ENCODE measurements at regions of chr1 and their contacts with region 1.

Region 1: GRCh38 chr1:159924981-159925712 is at the start of gene TAGLN2:
- DNase-seq: peak; percentile 82 to 94 (median 91)
- ATAC-seq: peak; percentile 55
- H3K4me3 ChIP-seq: peak within 1 kb of the TSS; percentile 83 to 96
- H3K4me3 Mint-ChIP-seq: peak within 1 kb of the TSS; percentile 95
- H3K27ac ChIP-seq: peak within 1 kb of the TSS; percentile 94 to 98
- H3K27ac Mint-ChIP-seq: peak within 1 kb of the TSS; percentile 98
- H3K4me1 ChIP-seq: peaks cover 40% of the 10 kb centered on the region
- H3K4me1 Mint-ChIP-seq: peaks cover 53% of the 10 kb centered on the region
- H3K27me3 ChIP-seq: no peaks in the 10 kb centered on the region
- H3K27me3 Mint-ChIP-seq: no peaks in the 10 kb centered on the region
- CTCF ChIP-seq: no peak
- total RNA-seq, gene TAGLN2: 235 to 238 TPM

Region 2: DNA sequence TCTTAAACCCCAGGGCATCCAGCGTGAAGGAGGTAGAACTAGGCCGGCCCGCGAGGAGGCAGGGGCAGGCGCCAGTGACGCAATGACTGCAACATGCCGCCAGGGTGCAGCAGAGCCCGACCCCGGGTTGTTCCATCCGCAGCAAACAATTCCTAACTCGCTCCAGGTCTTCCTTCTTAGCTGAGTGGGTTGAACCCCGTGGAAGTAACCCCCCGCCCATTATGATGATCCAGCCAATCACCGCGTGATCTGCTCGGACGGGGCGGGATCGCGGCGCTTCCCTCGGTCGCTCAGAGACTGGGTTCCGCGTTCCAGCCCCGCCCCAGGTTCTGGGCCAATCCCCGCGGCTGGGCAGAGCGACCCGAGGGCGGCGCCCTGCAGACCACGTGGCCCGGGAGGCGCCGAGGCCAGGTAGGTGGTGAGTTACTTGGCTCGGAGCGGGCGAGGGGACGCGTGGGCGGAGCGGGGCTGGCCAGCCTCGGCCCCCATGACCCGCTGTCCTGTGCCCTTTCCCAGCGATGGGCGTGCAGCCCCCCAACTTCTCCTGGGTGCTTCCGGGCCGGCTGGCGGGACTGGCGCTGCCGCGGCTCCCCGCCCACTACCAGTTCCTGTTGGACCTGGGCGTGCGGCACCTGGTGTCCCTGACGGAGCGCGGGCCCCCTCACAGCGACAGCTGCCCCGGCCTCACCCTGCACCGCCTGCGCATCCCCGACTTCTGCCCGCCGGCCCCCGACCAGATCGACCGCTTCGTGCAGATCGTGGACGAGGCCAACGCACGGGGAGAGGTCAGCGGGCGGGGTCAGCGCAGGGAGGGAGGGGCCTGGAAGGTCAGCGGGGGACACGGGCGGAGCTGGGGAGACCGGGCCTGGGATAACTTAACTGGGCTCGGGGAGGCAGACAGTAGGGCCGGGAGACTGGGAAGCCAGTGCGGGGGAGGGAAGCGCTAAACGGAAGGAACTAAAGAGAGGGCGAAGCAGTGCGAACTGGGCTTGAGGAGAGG is 144.3 kb before region 1 on chr1 and contains the start of gene DUSP23:
- CTCF ChIA-PET with region 1: interaction called, 6 read pairs
- POLR2A ChIA-PET with region 1: interaction called, 4 read pairs
- intact Hi-C with region 1: loop called (anchors 1 kb)
- DNase-seq: peak; percentile 90 to 98 (median 95)
- ATAC-seq: peak; percentile 96
- H3K4me3 ChIP-seq: peak within 1 kb of the TSS; percentile 59 to 69
- H3K4me3 Mint-ChIP-seq: peak within 1 kb of the TSS; percentile 89
- H3K27ac ChIP-seq: peak within 1 kb of the TSS; percentile 16 to 62
- H3K27ac Mint-ChIP-seq: peak within 1 kb of the TSS; percentile 89
- H3K4me1 ChIP-seq: peaks cover 10% of the 10 kb centered on the region
- H3K4me1 Mint-ChIP-seq: peaks cover 28% of the 10 kb centered on the region
- H3K27me3 ChIP-seq: no peaks in the 10 kb centered on the region
- H3K27me3 Mint-ChIP-seq: no peaks in the 10 kb centered on the region
- CTCF ChIP-seq: peak; percentile 78
- total RNA-seq, gene DUSP23: 3.8 to 6.3 TPM

Region 3: DNA sequence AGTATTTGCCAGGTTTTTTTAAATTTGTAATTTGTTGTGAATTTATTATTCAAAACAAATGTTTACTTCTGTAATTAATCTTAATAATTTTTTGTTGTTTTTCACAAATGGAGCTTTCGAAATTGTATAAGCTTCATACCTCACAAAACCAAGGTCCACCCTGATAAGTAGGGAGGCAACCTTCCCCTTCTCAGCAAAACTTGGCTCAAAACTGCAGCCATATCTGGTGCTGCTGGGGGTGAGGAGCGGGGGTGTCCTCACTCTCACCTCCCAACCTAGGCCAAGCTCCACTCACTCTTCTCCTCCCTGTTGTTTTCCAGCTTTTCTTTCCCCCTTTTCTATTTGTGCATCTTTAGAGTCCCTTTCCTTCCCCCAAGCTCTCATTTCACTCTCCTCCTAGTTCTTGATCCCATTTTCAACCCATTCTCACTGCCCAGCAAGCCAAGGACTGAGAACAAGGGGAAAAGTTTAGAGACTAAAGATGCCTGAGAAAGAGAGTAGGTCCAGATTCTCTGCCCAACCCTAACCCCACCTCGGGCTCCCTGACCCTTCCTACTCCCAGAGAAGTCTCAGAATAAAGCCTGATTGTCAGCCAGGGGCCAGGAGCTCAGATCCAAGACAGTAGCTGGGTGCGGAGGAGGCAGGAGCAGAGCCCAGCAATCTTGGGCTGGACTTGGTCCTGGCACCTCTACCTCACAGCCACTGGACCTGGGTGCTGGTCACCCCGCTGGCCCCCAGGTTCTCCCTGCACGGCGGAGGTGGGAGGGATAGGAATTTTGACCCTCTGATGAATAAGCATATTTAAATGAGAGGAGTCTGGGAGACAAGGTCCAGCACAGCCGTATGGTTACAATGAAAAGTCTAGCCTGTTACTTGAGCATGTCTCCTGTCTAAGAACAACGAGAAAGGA is 16.9 kb before region 1 on chr1:
- CTCF ChIA-PET with region 1: interaction called, 3 read pairs
- POLR2A ChIA-PET with region 1: interaction called, 14 read pairs
- intact Hi-C with region 1: no loop called
- DNase-seq: no peak
- ATAC-seq: no peak
- H3K4me3 ChIP-seq: no peak overlapping the region
- H3K4me3 Mint-ChIP-seq: no peak overlapping the region
- H3K27ac ChIP-seq: no peak overlapping the region
- H3K27ac Mint-ChIP-seq: peak overlapping the region; percentile 0
- H3K4me1 ChIP-seq: peaks cover 32% of the 10 kb centered on the region
- H3K4me1 Mint-ChIP-seq: peaks cover 52% of the 10 kb centered on the region
- H3K27me3 ChIP-seq: no peaks in the 10 kb centered on the region
- H3K27me3 Mint-ChIP-seq: no peaks in the 10 kb centered on the region
- CTCF ChIP-seq: no peak

Region 4: GRCh38 chr1:159945483-159946241 is 20.5 kb after region 1 on chr1 and contains the start of gene IGSF9:
- CTCF ChIA-PET with region 1: interaction called, 3 read pairs
- POLR2A ChIA-PET with region 1: interaction called, 3 read pairs
- intact Hi-C with region 1: loop called (anchors 1 to 2 kb)
- DNase-seq: peak; percentile 67 to 92 (median 86)
- ATAC-seq: peak; percentile 97
- H3K4me3 ChIP-seq: peak within 1 kb of the TSS; percentile 13 to 32
- H3K4me3 Mint-ChIP-seq: peak within 1 kb of the TSS; percentile 68
- H3K27ac ChIP-seq: no peak within 1 kb of the TSS
- H3K27ac Mint-ChIP-seq: no peak within 1 kb of the TSS
- H3K4me1 ChIP-seq: peaks cover 12% of the 10 kb centered on the region
- H3K4me1 Mint-ChIP-seq: peaks cover 13% of the 10 kb centered on the region
- H3K27me3 ChIP-seq: peaks cover 5 to 16% of the 10 kb centered on the region in 2 experiments
- H3K27me3 Mint-ChIP-seq: peaks cover 26% of the 10 kb centered on the region
- CTCF ChIP-seq: peak; percentile 67
- total RNA-seq, gene IGSF9: not detected

Region 5: DNA sequence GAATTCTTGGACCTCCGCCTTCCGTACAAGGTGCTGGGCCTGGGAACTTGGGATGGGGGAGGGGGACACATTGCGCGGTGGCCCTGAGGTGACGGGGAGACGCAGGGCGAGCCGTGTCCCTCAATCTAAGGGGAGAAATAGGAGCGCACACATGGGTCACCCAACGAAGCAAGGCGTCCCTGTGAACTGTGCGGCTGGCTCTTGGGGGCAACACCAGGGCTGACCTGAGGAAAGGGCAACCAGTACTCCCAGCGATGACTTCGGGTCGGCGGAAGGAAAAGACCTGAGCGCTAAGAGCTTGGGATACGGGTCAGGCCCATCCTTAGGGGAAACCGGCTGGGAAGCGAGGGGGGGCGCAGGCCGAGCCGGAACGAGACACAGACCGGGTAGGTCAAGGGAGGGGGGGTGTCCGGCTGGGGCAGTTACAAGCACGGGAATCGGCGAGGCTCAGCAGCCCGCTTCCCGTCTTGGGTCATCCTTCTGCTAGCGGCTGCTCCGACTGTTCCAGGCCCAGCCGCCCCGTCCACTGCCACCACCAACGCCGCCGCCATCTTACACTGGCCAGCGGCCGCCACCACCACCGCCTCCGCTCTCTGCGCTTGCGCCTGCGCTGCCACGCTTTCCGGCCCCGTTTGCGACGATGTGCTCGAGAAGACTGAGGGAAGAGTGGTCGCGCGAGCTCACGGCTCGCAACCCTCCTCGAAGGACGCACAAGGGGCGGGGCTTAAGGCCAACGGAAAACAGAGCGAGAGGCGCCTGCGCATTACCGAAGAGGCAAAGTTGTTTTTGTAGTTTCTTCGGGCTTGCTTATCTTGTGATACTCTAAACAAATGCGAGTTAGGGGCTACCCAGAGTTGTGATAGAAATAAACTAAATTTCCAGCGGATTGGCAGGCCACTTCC is 337.0 kb after region 1 on chr1 and contains the start of gene DCAF8:
- CTCF ChIA-PET with region 1: no interaction called
- POLR2A ChIA-PET with region 1: no interaction called
- intact Hi-C with region 1: loop called (anchors 2 to 5 kb)
- DNase-seq: peak; percentile 97 to 99 (median 98)
- ATAC-seq: peak; percentile 87
- H3K4me3 ChIP-seq: peak within 1 kb of the TSS; percentile 91 to 99
- H3K4me3 Mint-ChIP-seq: peak within 1 kb of the TSS; percentile 96
- H3K27ac ChIP-seq: peak within 1 kb of the TSS; percentile 83 to 99
- H3K27ac Mint-ChIP-seq: peak within 1 kb of the TSS; percentile 98
- H3K4me1 ChIP-seq: peaks cover 31% of the 10 kb centered on the region
- H3K4me1 Mint-ChIP-seq: peaks cover 41% of the 10 kb centered on the region
- H3K27me3 ChIP-seq: no peaks in the 10 kb centered on the region
- H3K27me3 Mint-ChIP-seq: no peaks in the 10 kb centered on the region
- CTCF ChIP-seq: no peak
- total RNA-seq, gene DCAF8: 152 to 162 TPM

Region 6: DNA sequence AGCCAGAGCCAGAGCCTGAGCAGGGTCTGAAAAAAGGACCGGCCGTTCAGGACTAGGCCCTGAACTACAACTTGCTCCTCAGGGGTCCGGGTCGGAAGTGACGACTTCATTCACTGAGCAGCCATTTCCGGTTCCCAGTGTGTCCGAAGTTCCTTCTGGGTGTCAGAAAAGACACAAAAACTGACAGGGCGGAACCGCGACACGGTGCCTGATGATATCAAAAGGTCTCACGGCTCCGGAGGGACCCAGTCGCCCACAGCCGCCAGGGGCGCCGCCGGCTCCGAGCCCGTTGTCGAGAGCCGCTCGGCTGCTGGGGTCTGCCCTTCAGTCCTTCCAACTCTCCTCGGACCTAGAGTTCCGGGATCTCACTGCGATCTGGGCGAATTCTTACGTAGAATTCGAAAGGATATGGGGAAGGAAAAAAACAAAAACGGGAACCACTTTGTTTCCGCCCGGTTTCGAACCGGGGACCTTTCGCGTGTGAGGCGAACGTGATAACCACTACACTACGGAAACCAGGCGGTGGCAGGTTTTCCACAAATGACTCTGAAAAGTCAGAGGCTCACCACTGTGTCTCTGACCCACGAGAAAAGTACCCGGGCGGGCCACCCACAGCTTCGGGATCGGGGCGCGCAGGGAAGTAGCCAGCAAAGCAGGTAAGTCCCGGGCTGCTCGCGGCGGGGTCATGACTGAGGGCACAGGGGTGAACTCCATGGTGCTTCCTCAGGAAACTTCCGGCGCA is 1474.3 kb after region 1 on chr1:
- CTCF ChIA-PET with region 1: no interaction called
- POLR2A ChIA-PET with region 1: no interaction called
- intact Hi-C with region 1: loop called (anchors 10 kb)
- DNase-seq: peak; percentile 84 to 97 (median 95)
- ATAC-seq: peak; percentile 83
- H3K4me3 ChIP-seq: peak overlapping the region; percentile 81 to 87
- H3K4me3 Mint-ChIP-seq: peak overlapping the region; percentile 96
- H3K27ac ChIP-seq: peak overlapping the region; percentile 96 to 98
- H3K27ac Mint-ChIP-seq: peak overlapping the region; percentile 98
- H3K4me1 ChIP-seq: peaks cover 19% of the 10 kb centered on the region
- H3K4me1 Mint-ChIP-seq: peaks cover 28% of the 10 kb centered on the region
- H3K27me3 ChIP-seq: no peaks in the 10 kb centered on the region
- H3K27me3 Mint-ChIP-seq: no peaks in the 10 kb centered on the region
- CTCF ChIP-seq: peak; percentile 88

Measured in CD8-positive, alpha-beta T cell (primary cell).